H1 (cell line): ENCODE measurements at regions of chr3 and their contacts with region 1.

Region 1: DNA sequence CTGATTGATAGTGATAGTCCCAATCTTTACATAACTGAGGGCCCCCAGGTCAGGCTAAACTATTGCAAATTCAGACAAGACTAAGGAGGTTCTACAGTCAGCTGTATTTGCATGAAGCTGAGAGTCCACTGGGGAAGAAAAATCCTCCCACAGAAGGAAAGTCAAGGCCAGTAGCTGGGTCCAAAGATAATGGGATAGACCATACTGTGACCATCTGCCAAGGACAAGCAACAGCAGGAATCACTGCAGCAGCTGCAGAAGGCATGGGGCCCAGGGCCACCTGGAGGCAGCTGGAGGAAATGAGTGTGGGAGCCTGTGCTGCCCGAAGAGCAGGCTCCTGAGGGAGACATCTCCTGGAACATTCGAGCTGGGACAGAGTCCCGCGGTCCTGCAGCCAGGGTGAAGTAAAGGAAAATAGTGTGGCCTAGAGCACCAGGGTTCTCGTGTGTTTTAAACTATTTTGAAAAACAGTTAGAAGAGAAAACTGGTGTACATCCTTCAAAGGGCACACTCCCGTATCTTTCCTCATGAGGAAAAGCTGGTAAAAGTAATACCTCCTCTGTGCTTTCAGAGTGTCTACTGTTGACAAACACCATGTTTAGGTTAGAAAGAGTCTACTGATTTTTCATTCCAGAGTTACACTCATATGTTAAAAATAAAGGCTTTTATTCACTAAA is 13.2 kb upstream of the TMEM212 start:
- DNase-seq: peak in 1 of 2 experiments; percentile 73
- H3K4me3 ChIP-seq: no peak overlapping the region
- H3K27ac ChIP-seq: no peak overlapping the region
- H3K4me1 ChIP-seq: peaks cover 2 to 6% (median 3%) of the 10 kb centered on the region in 4 experiments; a peak in 5 of 7 replicates
- H3K27me3 ChIP-seq: no peaks in the 10 kb centered on the region
- CTCF ChIP-seq: peak; percentile 77 to 92 (median 89)
- EP300 ChIP-seq: no peak
- POLR2A ChIP-seq: no peak
- RAD21 ChIP-seq: peak; percentile 74 to 86

Region 2: DNA sequence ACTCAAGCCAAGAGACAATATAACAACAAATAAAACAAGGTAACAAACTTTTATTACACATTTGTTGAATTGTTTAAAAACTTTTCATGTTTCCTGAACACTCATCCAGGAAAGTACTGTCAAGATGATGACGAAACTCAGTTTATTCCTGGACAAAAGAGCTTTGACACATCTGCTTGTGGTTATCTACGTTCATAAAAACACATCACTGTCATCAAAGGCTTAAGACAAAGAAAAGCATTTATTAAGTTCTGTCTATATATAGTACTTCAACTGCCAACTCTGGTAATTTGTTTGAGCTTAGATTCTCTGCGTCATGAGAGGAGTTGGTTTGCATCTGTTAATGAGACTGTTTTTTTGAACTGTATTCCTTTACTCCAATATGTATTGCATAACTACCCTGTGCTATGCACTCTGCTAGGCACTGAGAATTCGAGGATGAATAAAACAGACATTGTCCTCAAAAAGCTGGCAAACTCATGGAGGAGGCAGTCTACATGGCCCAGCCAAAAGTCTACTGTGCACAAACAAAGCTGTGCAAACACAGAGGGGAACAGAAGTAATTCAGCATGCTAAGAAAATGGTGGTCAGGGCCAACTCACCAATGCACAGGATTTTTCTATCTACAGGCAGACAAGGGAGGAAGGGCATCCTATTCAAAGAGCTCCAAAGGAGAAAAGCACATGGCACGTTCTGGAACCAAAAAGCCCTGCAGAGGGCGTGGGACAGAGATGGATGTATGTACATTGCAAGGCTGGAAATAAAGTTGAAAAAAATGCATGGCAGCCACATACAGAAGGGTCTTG is 41.2 kb before region 1 on chr3:
- CTCF ChIA-PET with region 1: interaction called, 18 read pairs
- POLR2A ChIA-PET with region 1: no interaction called
- DNase-seq: no peak
- H3K4me3 ChIP-seq: no peak overlapping the region
- H3K27ac ChIP-seq: no peak overlapping the region
- H3K4me1 ChIP-seq: peaks cover 0 to 3% (median 3%) of the 10 kb centered on the region in 4 experiments; a peak in 3 of 7 replicates
- H3K27me3 ChIP-seq: no peaks in the 10 kb centered on the region
- CTCF ChIP-seq: no peak
- EP300 ChIP-seq: no peak
- POLR2A ChIP-seq: no peak
- RAD21 ChIP-seq: 0 out of 4 replicates have a peak, but pooled peaks of 1 of the 2 experiments have one; percentile 7

Region 3: DNA sequence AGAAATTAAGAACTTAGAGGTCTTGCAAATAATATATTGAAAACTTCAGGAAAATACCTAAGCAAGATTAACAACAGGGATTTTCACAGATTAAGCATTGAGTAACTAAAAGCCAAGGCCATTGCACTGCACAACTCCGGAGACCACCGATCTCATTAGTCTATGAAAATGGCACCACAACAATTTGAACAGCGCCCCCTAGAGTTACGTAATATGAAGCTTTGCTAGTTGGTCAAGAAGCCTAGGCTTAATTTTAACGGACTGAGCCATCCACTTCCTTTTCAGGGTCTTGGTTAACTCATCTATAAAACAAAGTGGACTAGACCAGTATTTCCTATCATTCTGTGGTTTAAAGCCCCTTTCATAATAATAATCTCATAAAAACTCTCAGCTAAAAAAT is 38.0 kb after region 1 on chr3:
- CTCF ChIA-PET with region 1: interaction called, 10 read pairs
- POLR2A ChIA-PET with region 1: no interaction called
- DNase-seq: no peak
- H3K4me3 ChIP-seq: no peak overlapping the region
- H3K27ac ChIP-seq: no peak overlapping the region
- H3K4me1 ChIP-seq: peaks cover 0 to 3% (median 2%) of the 10 kb centered on the region in 4 experiments; a peak in 2 of 7 replicates
- H3K27me3 ChIP-seq: no peaks in the 10 kb centered on the region
- CTCF ChIP-seq: peak in 2 of 3 experiments; percentile 31 to 57; a peak in 3 of 4 replicates
- EP300 ChIP-seq: no peak
- POLR2A ChIP-seq: no peak
- RAD21 ChIP-seq: peak; percentile 24 to 32; a peak in 3 of 4 replicates